ENCODE measurements at regions of chr11 and their contacts with region 1.

Region 1: GRCh38 chr11:67288452-67289225 is 464 bp upstream of the ANKRD13D start:
- DNase-seq: peak; percentile 78 to 97 (median 92)
- ATAC-seq: peak; percentile 67
- H3K4me3 ChIP-seq: peak overlapping the region; percentile 90 to 92
- H3K4me3 Mint-ChIP-seq: peak overlapping the region; percentile 80
- H3K27ac ChIP-seq: peak overlapping the region; percentile 79 to 98
- H3K27ac Mint-ChIP-seq: peak overlapping the region; percentile 98
- H3K4me1 ChIP-seq: peaks cover 64% of the 10 kb centered on the region
- H3K4me1 Mint-ChIP-seq: peaks cover 59% of the 10 kb centered on the region
- H3K27me3 ChIP-seq: no peaks in the 10 kb centered on the region
- H3K27me3 Mint-ChIP-seq: no peaks in the 10 kb centered on the region
- CTCF ChIP-seq: peak; percentile 58

Region 2: DNA sequence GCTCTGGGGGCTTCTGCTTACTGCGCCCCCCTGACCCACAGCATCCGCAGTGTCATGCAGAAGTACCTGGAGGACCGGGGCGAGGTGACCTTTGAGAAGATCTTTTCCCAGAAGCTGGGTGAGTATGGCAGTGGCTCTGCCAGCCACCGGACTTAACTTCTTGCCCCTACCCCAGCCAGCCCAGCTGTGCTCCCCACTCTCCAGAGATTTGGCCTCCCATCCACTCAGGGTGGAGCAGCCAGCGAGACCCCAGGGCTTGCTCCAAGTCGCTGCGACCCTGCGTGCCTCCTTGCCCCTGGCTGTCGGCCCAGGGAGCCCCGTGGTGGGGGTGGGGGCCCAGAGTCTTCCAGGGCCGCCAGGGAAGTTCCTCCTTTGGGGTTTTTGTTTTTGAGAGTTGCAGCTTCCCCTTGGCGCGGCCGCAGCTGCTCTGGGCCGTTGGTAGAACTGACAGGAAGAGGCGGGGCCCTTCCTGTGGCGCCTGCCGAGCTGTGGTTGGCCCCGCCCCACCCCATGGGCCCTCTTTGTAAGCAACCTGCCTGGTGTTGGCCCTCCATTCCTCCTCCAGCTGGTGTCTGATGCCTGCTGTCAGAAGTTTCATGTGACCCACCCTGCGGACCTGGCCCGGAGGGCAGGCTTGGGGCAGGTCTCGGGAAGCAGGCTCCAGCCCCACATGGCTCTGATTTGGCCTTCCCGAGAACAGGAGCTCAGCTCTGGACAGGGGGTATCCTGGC is 11.2 kb before region 1 on chr11:
- CTCF ChIA-PET with region 1: interaction called, 77 read pairs
- POLR2A ChIA-PET with region 1: interaction called, 426 read pairs
- intact Hi-C with region 1: loop called (anchors 1 kb)
- DNase-seq: peak; percentile 82 to 98 (median 93)
- ATAC-seq: peak; percentile 92
- H3K4me3 ChIP-seq: peak overlapping the region; percentile 46 to 79
- H3K4me3 Mint-ChIP-seq: peak overlapping the region; percentile 79
- H3K27ac ChIP-seq: peak overlapping the region; percentile 74 to 76
- H3K27ac Mint-ChIP-seq: peak overlapping the region; percentile 95
- H3K4me1 ChIP-seq: peaks cover 100% of the 10 kb centered on the region
- H3K4me1 Mint-ChIP-seq: peaks cover 68% of the 10 kb centered on the region
- H3K27me3 ChIP-seq: no peaks in the 10 kb centered on the region
- H3K27me3 Mint-ChIP-seq: no peaks in the 10 kb centered on the region
- CTCF ChIP-seq: no peak

Region 3: GRCh38 chr11:67303132-67303834 is 14.6 kb after region 1 on chr11 and contains the start of gene SSH3:
- CTCF ChIA-PET with region 1: no interaction called
- POLR2A ChIA-PET with region 1: interaction called, 31 read pairs
- intact Hi-C with region 1: loop called in 1 of 2 experiments (anchors 2 kb)
- DNase-seq: peak in 8 of 9 experiments; percentile 19 to 72 (median 48)
- ATAC-seq: peak; percentile 72
- H3K4me3 ChIP-seq: peak within 1 kb of the TSS; percentile 61 to 63
- H3K4me3 Mint-ChIP-seq: peak within 1 kb of the TSS; percentile 72
- H3K27ac ChIP-seq: peak within 1 kb of the TSS; percentile 32 to 37
- H3K27ac Mint-ChIP-seq: peak within 1 kb of the TSS; percentile 72
- H3K4me1 ChIP-seq: peaks cover 20% of the 10 kb centered on the region
- H3K4me1 Mint-ChIP-seq: peaks cover 16% of the 10 kb centered on the region
- H3K27me3 ChIP-seq: no peaks in the 10 kb centered on the region
- H3K27me3 Mint-ChIP-seq: no peaks in the 10 kb centered on the region
- CTCF ChIP-seq: no peak
- total RNA-seq, gene SSH3: 5.9 to 9.9 TPM

Region 4: GRCh38 chr11:67332081-67332691 is 43.5 kb after region 1 on chr11:
- CTCF ChIA-PET with region 1: no interaction called
- POLR2A ChIA-PET with region 1: no interaction called
- intact Hi-C with region 1: no loop called
- DNase-seq: no peak
- ATAC-seq: no peak
- H3K4me3 ChIP-seq: no peak overlapping the region
- H3K4me3 Mint-ChIP-seq: no peak overlapping the region
- H3K27ac ChIP-seq: no peak overlapping the region
- H3K27ac Mint-ChIP-seq: no peak overlapping the region
- H3K4me1 ChIP-seq: no peaks in the 10 kb centered on the region
- H3K4me1 Mint-ChIP-seq: no peaks in the 10 kb centered on the region
- H3K27me3 ChIP-seq: no peaks in the 10 kb centered on the region
- H3K27me3 Mint-ChIP-seq: no peaks in the 10 kb centered on the region
- CTCF ChIP-seq: no peak

Region 5: GRCh38 chr11:68076371-68077042 is 787.9 kb after region 1 on chr11:
- CTCF ChIA-PET with region 1: no interaction called
- POLR2A ChIA-PET with region 1: no interaction called
- intact Hi-C with region 1: no loop called
- DNase-seq: peak in 2 of 9 experiments; percentile 13 to 25
- ATAC-seq: no peak
- H3K4me3 ChIP-seq: no peak overlapping the region
- H3K4me3 Mint-ChIP-seq: no peak overlapping the region
- H3K27ac ChIP-seq: no peak overlapping the region
- H3K27ac Mint-ChIP-seq: no peak overlapping the region
- H3K4me1 ChIP-seq: no peaks in the 10 kb centered on the region
- H3K4me1 Mint-ChIP-seq: no peaks in the 10 kb centered on the region
- H3K27me3 ChIP-seq: no peaks in the 10 kb centered on the region
- H3K27me3 Mint-ChIP-seq: no peaks in the 10 kb centered on the region
- CTCF ChIP-seq: no peak